B cell (primary cell): ENCODE measurements at regions of chr12 and their contacts with region 1.

Region 1: DNA sequence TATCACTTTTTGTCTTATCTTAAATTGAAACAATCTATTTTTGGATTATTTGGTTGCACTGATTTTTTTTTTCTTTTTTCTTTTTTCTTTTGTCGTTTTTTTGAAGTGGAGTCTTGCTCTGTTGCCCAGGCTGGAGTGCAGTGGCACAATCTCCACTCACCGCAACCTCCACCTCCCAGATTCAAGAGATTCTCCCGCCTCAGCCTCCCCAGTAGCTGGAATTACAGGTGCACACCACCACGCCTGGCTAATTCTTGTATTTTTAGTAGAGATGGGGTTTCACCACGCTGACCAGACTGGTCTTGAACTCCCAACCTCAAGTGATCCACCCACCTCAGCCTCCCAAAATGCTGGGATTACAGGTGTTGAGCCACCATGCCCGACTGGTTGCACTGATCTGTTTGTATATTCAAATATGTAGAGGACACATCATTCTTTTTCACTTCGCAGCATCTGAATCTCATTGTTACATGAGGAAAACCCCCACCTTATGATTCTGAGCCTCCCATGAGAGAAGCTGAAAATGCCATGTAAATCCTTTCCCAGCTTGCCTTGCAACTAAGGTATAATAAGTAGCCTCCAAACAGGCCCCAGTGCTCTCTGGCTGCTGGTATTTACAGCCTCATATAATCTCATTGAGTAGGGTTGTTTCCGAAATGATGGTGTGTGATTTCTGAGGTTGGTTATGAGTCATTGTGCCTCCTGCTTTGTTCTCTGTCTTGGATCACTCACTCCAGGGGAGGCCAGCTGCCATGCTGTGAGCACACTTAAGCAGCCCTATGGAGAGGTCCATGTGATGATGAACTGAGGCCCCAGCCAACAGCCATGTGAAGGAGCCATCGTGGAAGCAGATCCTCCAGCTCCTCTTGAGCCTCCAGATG is 5.2 kb upstream of the HSP90B1 start:
- DNase-seq: no peak
- ATAC-seq: no peak
- H3K4me3 ChIP-seq: no peak overlapping the region
- H3K4me3 Mint-ChIP-seq: peak overlapping the region; percentile 47
- H3K27ac ChIP-seq: no peak overlapping the region
- H3K27ac Mint-ChIP-seq: peak overlapping the region; percentile 88
- H3K4me1 ChIP-seq: peaks cover 13 to 15% of the 10 kb centered on the region in 2 donors
- H3K4me1 Mint-ChIP-seq: peaks cover 32% of the 10 kb centered on the region
- H3K27me3 ChIP-seq: no peaks in the 10 kb centered on the region
- H3K27me3 Mint-ChIP-seq: no peaks in the 10 kb centered on the region
- CTCF ChIP-seq: no peak

Region 2: DNA sequence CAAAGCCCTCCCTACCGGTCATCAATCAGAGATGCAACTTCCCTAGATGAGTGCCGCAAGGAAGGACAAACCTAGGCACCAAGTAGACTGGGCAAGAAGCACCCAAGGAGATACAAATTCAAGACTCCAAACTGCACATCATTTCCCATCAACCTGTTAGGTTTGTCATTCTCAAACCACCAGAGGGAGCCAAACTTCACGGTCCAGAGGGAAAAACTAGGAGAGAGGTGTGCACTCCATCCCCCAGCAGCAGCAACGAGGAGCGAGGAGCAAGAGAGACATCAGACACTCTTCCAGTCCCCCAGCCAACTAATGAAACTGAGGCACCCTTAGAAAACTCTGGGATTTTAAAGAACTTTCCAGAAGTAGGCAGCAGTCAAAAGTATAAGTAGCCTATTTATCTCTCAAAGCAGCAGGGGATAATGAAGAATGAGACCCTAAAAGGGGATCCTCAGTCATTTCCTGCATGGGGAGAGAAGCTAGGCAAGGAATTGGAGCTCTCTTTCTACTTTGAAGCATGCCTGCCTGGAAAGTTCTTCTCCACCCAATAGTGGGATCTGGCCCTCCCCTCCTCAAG is 47.0 kb before region 1 on chr12:
- CTCF ChIA-PET with region 1: interaction called, 22 read pairs
- POLR2A ChIA-PET with region 1: interaction called, 3 read pairs
- intact Hi-C with region 1: loop called (anchors 1 kb)
- DNase-seq: peak; percentile 74
- ATAC-seq: peak; percentile 70
- H3K4me3 ChIP-seq: no peak overlapping the region
- H3K4me3 Mint-ChIP-seq: no peak overlapping the region
- H3K27ac ChIP-seq: no peak overlapping the region
- H3K27ac Mint-ChIP-seq: no peak overlapping the region
- H3K4me1 ChIP-seq: peaks cover 15 to 20% of the 10 kb centered on the region in 2 donors
- H3K4me1 Mint-ChIP-seq: peaks cover 29% of the 10 kb centered on the region
- H3K27me3 ChIP-seq: no peaks in the 10 kb centered on the region
- H3K27me3 Mint-ChIP-seq: no peaks in the 10 kb centered on the region
- CTCF ChIP-seq: peak; percentile 81

Region 3: DNA sequence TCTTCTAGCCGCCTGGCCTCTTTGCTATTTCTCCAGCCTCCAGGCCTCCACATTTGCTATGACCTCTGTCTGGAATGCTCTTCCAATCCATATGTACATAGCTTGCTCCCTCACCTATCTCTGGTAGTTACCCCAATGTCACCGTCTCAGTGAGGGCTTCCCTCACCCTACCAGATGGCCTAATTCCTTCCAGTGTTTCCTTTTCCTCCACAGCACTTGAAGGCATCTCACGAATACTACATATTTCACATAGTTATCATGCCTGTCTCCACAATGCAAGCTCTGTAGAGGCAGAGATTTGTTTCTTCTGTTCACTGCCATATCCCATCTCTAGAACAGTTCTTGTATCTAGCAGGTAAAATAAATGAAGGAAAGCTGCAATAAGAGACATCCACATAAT is 16.1 kb before region 1 on chr12:
- CTCF ChIA-PET with region 1: no interaction called
- POLR2A ChIA-PET with region 1: no interaction called
- intact Hi-C with region 1: no loop called
- DNase-seq: no peak
- ATAC-seq: no peak
- H3K4me3 ChIP-seq: no peak overlapping the region
- H3K4me3 Mint-ChIP-seq: no peak overlapping the region
- H3K27ac ChIP-seq: no peak overlapping the region
- H3K27ac Mint-ChIP-seq: no peak overlapping the region
- H3K4me1 ChIP-seq: no peaks in the 10 kb centered on the region
- H3K4me1 Mint-ChIP-seq: peaks cover 2% of the 10 kb centered on the region
- H3K27me3 ChIP-seq: no peaks in the 10 kb centered on the region
- H3K27me3 Mint-ChIP-seq: peaks cover 5% of the 10 kb centered on the region
- CTCF ChIP-seq: no peak